Sigmoid colon (tissue), 7 donors: ENCODE measurements at regions of chr10 and their contacts with region 1.

Region 1: DNA sequence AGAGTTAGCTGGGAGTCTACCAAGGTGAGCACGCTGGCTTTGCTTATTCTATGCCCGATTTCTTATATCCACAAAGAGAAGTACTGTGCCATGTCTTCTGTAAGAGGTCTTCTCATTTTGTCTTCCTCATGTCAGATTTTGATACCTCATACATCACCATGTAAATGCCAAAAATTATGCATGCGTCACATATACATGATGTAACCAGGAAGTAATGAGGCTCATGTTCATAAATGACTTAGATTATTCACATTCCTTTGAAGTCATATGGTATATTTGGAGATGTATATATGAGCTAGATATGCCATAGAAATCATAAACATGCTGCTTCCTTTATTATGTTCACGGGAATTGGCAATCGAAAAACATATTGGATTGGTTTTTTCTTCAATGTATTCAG is 97.7 kb upstream of the CELF2 start:
- DNase-seq: no peak
- H3K4me3 ChIP-seq: no peak overlapping the region
- H3K27ac ChIP-seq: no peak overlapping the region
- H3K4me1 ChIP-seq: peaks cover 0 to 34% (median 11%) of the 10 kb centered on the region in 4 donors
- H3K27me3 ChIP-seq: no peaks in the 10 kb centered on the region
- CTCF ChIP-seq: no peak
- EP300 ChIP-seq: no peak
- POLR2A ChIP-seq: no peak

Region 2: DNA sequence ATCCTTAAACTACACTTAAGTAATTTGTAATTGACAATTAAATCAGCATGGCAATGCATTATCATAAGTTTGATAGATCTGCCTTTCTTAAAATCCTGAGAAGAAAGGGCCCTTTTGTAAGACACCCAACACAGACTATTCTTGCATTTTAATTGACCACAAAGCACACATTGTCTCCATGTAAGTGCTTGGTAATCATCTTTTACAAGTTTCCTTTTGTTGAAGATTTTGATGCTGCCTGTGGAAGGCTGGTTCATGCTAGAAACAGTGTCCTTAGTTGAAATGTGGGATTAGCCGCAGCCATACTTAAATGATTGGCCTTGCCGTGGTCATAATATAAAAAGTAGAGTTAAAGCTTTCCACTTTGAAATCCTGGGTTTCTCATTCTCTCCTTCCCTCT is 65.4 kb after region 1 on chr10:
- intact Hi-C with region 1: loop called (anchors 10 kb)
- DNase-seq: no peak
- H3K4me3 ChIP-seq: no peak overlapping the region
- H3K27ac ChIP-seq: peak overlapping the region in 1 of 4 donors; percentile 21
- H3K4me1 ChIP-seq: peaks cover 0 to 8% (median 0%) of the 10 kb centered on the region in 4 donors
- H3K27me3 ChIP-seq: no peaks in the 10 kb centered on the region
- CTCF ChIP-seq: no peak
- EP300 ChIP-seq: no peak
- POLR2A ChIP-seq: no peak